Activated naive CD4-positive, alpha-beta T cell treated with anti-CD3 and anti-CD28 coated beads for 36 hours (primary cell): ENCODE measurements at regions of chr15 and their contacts with region 1.

Region 1: DNA sequence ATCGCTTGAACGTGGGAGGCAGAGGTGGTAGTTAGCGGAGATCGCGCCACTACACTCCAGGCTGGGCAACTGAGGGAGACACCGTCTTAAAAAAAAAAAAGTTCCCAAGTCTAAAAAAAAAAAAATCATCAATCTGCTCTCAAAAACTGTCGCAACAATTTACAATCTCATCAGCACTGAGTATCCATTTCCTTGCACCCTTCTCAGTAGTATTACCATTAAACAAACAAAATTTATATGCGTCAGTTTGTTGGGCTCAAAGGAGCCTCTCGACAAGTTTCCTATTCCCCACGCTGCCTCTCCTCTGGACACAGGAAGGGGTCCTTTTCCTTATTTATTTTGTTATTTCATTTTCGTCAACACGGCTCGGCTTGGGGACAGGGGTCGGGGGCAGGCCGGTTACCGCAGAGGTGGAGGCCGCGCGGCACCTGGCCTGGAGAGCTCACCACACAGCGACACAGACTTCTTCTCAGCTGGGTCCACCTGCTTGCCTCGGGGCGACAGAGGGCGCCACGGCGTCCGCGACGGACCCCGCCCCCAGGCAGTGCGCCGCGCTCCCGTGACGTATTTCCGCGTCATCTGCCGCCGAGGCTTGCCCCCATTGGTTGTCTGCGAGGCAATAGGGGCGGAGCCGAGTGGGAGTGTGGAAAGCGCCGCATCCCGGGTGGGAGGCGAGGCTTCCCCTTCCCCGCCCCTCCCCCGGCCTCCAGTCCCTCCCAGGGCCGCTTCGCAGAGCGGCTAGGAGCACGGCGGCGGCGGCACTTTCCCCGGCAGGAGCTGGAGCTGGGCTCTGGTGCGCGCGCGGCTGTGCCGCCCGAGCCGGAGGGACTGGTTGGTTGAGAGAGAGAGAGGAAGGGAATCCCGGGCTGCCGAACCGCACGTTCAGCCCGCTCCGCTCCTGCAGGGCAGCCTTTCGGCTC is at the start of gene MAP2K1:
- DNase-seq: peak; percentile 98
- H3K4me3 Mint-ChIP-seq: peak within 1 kb of the TSS; percentile 100
- H3K27ac Mint-ChIP-seq: peak within 1 kb of the TSS; percentile 98
- H3K4me1 Mint-ChIP-seq: peaks cover 51% of the 10 kb centered on the region
- H3K27me3 Mint-ChIP-seq: no peaks in the 10 kb centered on the region
- total RNA-seq, gene MAP2K1: 69.6 to 72.6 TPM

Region 2: DNA sequence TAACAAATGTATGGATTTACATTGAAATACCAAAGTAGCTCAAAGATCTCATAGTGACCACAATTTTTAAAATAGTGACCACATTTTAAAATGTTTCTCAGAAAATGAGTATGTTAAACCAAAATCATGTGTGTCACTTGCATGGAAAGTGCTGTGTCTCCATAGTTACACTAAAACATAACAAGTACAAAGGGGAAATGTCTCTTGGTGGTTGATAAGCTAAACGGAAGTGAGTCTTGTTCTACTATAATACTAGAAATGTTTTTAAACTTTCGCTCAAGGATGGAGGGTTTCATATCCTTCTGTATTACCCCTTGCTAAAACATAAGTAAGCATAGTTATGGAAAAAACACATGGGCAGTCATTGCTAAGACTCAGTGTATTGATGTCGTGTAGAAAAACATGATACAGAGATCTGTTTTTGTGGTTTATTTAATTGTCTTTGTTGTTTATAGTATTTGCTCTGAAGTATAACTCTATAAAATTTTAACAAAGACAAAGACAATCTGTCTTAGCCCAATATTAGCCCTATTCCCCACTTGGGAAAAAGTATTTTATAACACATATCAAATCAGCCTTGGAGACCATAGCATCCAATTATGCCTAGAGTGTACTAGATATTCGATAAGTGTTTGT is 567.4 kb before region 1 on chr15:
- CTCF ChIA-PET with region 1: no interaction called
- intact Hi-C with region 1: loop called (anchors 5 kb)
- DNase-seq: no peak
- H3K4me3 Mint-ChIP-seq: peak overlapping the region; percentile 22
- H3K27ac Mint-ChIP-seq: peak overlapping the region; percentile 59
- H3K4me1 Mint-ChIP-seq: peaks cover 47% of the 10 kb centered on the region
- H3K27me3 Mint-ChIP-seq: no peaks in the 10 kb centered on the region

Region 3: DNA sequence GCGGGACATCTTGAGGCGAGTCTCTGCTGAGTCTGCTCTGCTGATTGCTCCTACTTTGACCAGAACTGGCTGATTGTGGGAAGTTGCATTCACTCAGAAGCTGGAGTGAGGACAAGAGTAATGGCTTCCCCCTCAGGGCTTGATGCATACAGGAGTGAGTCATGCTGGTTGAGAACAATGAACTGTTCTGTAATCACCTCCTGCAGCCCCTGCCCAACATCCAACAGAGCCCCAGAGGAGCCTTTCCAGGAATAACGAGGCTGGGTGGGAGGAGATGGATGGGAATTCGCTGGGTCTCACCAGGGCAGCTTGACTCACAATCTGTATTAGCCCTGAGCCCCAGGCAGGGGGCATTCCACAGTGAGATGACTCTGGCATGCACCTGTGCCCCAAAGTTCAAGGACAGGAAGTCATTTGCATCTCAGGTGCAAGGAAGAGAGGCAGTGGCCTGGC is 432.1 kb before region 1 on chr15:
- CTCF ChIA-PET with region 1: no interaction called
- intact Hi-C with region 1: no loop called
- DNase-seq: no peak
- H3K4me3 Mint-ChIP-seq: no peak overlapping the region
- H3K27ac Mint-ChIP-seq: no peak overlapping the region
- H3K4me1 Mint-ChIP-seq: no peaks in the 10 kb centered on the region
- H3K27me3 Mint-ChIP-seq: no peaks in the 10 kb centered on the region

Region 4: DNA sequence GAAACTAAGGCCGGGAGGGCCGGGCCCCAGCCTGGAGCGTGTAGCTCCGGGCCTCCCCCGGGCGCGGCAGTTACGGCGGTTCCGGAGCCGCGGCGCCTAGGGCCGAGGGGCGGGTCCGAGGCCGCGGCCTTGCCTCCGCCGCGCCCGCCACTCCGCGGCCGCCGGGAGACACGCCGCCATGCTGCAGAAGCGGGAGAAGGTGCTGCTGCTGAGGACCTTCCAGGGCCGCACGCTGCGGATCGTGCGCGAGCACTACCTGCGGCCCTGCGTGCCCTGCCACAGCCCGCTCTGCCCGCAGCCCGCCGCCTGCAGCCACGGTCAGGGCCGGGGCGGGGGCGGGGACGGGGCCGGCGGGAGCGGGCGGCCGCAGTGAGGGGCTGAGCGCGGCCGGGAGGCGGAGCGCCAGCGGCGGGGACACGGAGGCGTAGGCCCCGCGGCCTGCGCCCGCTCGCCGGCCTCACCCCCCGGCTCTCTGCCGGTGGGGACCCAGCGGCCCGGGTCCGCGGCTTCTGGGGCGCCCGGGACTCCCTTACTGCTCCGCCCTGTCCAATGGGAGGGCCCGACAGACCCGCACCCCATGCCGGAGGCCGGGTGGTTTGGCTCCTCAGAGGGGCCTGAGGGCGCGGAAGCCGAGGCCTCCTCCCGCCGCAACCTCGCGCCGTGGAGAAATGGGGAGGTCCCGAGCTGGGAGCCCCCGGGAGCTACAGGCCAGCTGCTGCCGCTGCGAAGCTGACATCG is 92.9 kb before region 1 on chr15 and contains the start of gene DIS3L:
- CTCF ChIA-PET with region 1: interaction called, 3 read pairs
- intact Hi-C with region 1: loop called (anchors 1 kb)
- DNase-seq: peak; percentile 66
- H3K4me3 Mint-ChIP-seq: peak within 1 kb of the TSS; percentile 84
- H3K27ac Mint-ChIP-seq: peak within 1 kb of the TSS; percentile 92
- H3K4me1 Mint-ChIP-seq: peaks cover 38% of the 10 kb centered on the region
- H3K27me3 Mint-ChIP-seq: no peaks in the 10 kb centered on the region
- total RNA-seq, gene DIS3L: 24.0 to 24.6 TPM

Region 5: GRCh38 chr15:66369773-66370651 is 16.5 kb before region 1 on chr15:
- CTCF ChIA-PET with region 1: interaction called, 3 read pairs
- intact Hi-C with region 1: loop called (anchors 1 kb)
- DNase-seq: peak; percentile 66
- H3K4me3 Mint-ChIP-seq: peak overlapping the region; percentile 66
- H3K27ac Mint-ChIP-seq: peak overlapping the region; percentile 92
- H3K4me1 Mint-ChIP-seq: peaks cover 16% of the 10 kb centered on the region
- H3K27me3 Mint-ChIP-seq: no peaks in the 10 kb centered on the region

Region 6: DNA sequence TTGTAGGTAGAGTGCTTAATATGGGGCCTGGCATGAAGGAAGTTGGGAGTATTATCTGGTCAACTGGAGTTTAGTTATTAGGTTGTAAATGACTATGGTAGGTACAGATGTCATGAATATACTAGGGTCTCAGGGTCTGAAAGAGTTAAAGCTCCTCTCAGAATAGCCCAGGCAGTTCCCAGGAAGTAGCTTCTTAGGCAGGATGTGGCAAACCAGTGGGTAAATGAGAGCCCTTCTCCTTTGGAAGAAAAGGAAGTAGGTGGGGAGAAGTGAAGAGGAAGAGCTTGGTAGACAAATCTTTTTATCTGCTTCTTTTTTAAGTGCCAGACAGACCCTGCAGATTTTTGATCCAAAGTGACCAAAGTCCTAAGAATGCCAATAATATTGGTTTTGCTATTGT is 24.7 kb after region 1 on chr15:
- CTCF ChIA-PET with region 1: no interaction called
- intact Hi-C with region 1: no loop called
- DNase-seq: no peak
- H3K4me3 Mint-ChIP-seq: no peak overlapping the region
- H3K27ac Mint-ChIP-seq: peak overlapping the region; percentile 53
- H3K4me1 Mint-ChIP-seq: peaks cover 75% of the 10 kb centered on the region
- H3K27me3 Mint-ChIP-seq: no peaks in the 10 kb centered on the region

Region 7: GRCh38 chr15:66424963-66425612 is 38.6 kb after region 1 on chr15:
- CTCF ChIA-PET with region 1: no interaction called
- intact Hi-C with region 1: loop called (anchors 2 kb)
- DNase-seq: peak; percentile 22
- H3K4me3 Mint-ChIP-seq: peak overlapping the region; percentile 42
- H3K27ac Mint-ChIP-seq: peak overlapping the region; percentile 77
- H3K4me1 Mint-ChIP-seq: peaks cover 55% of the 10 kb centered on the region
- H3K27me3 Mint-ChIP-seq: no peaks in the 10 kb centered on the region

Region 8: GRCh38 chr15:66497502-66498455 is 111.3 kb after region 1 on chr15 and contains the start of gene SNAPC5:
- CTCF ChIA-PET with region 1: interaction called, 40 read pairs
- intact Hi-C with region 1: loop called (anchors 1 kb)
- DNase-seq: peak; percentile 98
- H3K4me3 Mint-ChIP-seq: peak within 1 kb of the TSS; percentile 89
- H3K27ac Mint-ChIP-seq: peak within 1 kb of the TSS; percentile 95
- H3K4me1 Mint-ChIP-seq: peaks cover 60% of the 10 kb centered on the region
- H3K27me3 Mint-ChIP-seq: no peaks in the 10 kb centered on the region
- total RNA-seq, gene SNAPC5: 23.7 to 23.9 TPM